Pancreas (tissue), 10 donors: ENCODE measurements at regions of chr9 and their contacts with region 1.

Region 1: GRCh38 chr9:129783516-129784361 is 19.2 kb upstream of the TOR1B start:
- DNase-seq: peak in 5 of 6 donors; percentile 65 to 80 (median 66)
- ATAC-seq: peak; percentile 88 to 100 (median 98)
- H3K4me3 ChIP-seq: no peak overlapping the region
- H3K27ac ChIP-seq: no peak overlapping the region
- H3K4me1 ChIP-seq: no peaks in the 10 kb centered on the region
- H3K27me3 ChIP-seq: no peaks in the 10 kb centered on the region
- CTCF ChIP-seq: peak; percentile 64 to 89 (median 84)

Region 2: DNA sequence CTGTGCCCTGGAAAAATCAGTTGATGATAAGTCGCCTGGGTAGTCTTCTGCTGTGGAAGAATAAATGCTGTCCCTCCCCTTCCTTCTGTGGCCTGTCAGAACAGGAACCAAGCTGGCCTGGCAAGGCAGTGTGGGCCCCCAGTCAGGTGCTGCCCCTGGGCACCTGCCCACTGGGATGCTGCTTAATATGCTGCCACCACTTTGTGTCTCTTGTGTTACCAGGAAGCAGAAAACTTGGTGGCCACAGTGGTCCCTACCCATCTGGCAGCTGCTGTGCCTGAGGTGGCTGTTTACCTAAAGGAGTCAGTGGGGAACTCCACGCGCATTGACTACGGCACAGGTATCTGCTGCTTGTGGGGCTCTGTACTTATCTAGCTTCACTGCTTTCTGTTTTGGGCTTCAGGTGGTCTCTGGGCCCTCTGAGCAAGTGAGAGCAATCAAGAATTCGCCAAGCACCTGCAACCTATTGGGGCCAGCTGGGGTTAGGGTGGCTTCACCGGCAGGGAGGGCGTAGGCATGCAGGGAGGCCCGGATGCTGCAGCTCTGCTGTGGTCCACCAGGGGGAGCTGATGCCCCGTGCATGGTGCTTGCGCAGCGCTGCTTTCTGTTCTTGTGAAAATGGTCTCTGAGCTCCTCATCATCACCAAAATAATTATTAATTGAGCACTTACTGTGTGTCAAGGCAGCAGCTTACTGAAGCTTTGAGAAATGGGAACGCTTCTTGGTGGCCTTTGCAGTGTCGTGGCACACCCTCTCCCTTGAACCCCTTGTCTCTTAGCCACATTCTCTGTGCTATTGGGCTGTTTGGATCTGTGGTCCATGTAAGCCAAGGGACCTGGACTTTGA is 652.2 kb before region 1 on chr9:
- intact Hi-C with region 1: loop called in 1 of 3 experiments (anchors 5 kb)
- DNase-seq: peak; percentile 66 to 92 (median 84)
- ATAC-seq: peak; percentile 83 to 97 (median 94)
- H3K4me3 ChIP-seq: no peak overlapping the region
- H3K27ac ChIP-seq: no peak overlapping the region
- H3K4me1 ChIP-seq: no peaks in the 10 kb centered on the region
- H3K27me3 ChIP-seq: no peaks in the 10 kb centered on the region
- CTCF ChIP-seq: peak; percentile 96 to 98 (median 97)

Region 3: GRCh38 chr9:129648092-129648763 is 135.5 kb before region 1 on chr9:
- intact Hi-C with region 1: loop called in 1 of 3 experiments (anchors 5 kb)
- DNase-seq: no peak
- ATAC-seq: no peak
- H3K4me3 ChIP-seq: no peak overlapping the region
- H3K27ac ChIP-seq: no peak overlapping the region
- H3K4me1 ChIP-seq: no peaks in the 10 kb centered on the region
- H3K27me3 ChIP-seq: no peaks in the 10 kb centered on the region
- CTCF ChIP-seq: no peak

Region 4: GRCh38 chr9:129737479-129738274 is 46.1 kb before region 1 on chr9:
- intact Hi-C with region 1: loop called (anchors 2 to 10 kb)
- DNase-seq: peak; percentile 79 to 96 (median 88)
- ATAC-seq: peak; percentile 94 to 98 (median 96)
- H3K4me3 ChIP-seq: peak overlapping the region; percentile 31 to 59 (median 50)
- H3K27ac ChIP-seq: peak overlapping the region; percentile 11 to 46 (median 38)
- H3K4me1 ChIP-seq: no peaks in the 10 kb centered on the region
- H3K27me3 ChIP-seq: no peaks in the 10 kb centered on the region
- CTCF ChIP-seq: peak; percentile 95 to 99 (median 98)